ENCODE measurements at regions of chr3 and their contacts with region 1.

Region 1: GRCh38 chr3:64945171-64945729 is 257.4 kb upstream of the ADAMTS9 start:
- DNase-seq: peak; percentile 84 to 87
- H3K4me3 ChIP-seq: no peak overlapping the region
- H3K4me3 Mint-ChIP-seq: peak overlapping the region; percentile 25
- H3K27ac Mint-ChIP-seq: peak overlapping the region; percentile 10
- H3K4me1 ChIP-seq: peaks cover 25% of the 10 kb centered on the region
- H3K4me1 Mint-ChIP-seq: peaks cover 13% of the 10 kb centered on the region
- H3K27me3 ChIP-seq: no peaks in the 10 kb centered on the region
- H3K27me3 Mint-ChIP-seq: no peaks in the 10 kb centered on the region
- CTCF ChIP-seq: no peak

Region 2: DNA sequence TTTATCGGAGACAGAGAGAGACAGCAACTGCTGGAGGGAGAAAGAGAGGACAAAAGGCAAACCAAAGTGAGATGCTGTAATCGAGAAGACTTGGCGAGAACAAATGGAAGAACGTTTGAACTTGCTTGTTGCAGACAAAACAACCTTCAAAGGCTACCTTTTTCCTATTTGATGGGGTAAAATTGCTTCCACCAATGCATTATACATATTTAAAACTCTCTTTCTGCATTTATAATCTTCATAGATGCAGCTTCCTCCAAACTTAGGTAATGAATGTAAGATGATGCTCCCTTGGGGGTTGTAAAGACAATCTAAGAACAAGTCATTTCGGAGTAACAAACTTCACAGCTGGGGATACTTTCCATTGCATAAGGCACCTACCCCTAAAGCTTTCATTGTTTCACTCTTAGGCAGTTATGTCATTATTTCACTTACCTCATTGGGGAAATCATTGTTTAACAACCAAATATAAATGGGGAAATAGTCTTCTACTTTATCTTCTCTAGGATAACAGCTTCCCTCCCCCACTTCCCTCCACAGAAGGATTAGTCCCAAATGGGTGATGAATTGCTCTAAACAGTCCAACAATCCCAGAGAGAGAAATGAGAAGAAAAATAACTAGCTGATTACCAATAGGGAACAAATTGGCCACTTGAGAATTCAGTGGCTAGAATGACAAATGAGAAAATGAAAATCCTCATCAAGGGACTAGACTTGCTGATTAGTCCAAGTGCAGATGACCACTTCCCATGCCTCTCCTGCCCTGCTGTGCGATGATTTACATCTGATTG is 12.4 kb after region 1 on chr3:
- CTCF ChIA-PET with region 1: no interaction called
- POLR2A ChIA-PET with region 1: no interaction called
- intact Hi-C with region 1: no loop called
- DNase-seq: no peak
- H3K4me3 ChIP-seq: no peak overlapping the region
- H3K4me3 Mint-ChIP-seq: no peak overlapping the region
- H3K27ac Mint-ChIP-seq: no peak overlapping the region
- H3K4me1 ChIP-seq: no peaks in the 10 kb centered on the region
- H3K4me1 Mint-ChIP-seq: no peaks in the 10 kb centered on the region
- H3K27me3 ChIP-seq: no peaks in the 10 kb centered on the region
- H3K27me3 Mint-ChIP-seq: no peaks in the 10 kb centered on the region
- CTCF ChIP-seq: no peak

Region 3: DNA sequence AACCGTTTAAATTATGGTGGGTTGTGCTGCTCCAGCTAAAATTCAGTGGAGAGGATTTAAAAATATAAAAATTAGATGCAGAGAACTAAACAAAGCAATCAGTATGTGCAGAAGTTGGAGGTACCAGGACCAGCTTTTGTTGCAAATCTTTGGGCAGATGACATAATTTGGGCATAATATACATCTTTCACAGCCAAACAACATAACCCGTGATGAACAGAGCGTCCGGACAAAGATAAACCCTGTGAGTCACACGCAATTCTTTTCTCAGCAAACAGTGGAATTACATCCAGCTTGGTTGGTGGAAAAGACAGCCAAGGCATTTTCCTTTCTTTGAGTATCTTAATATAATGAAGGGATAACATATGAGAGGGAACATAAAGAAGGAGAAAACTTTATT is 161.9 kb after region 1 on chr3:
- CTCF ChIA-PET with region 1: no interaction called
- POLR2A ChIA-PET with region 1: no interaction called
- intact Hi-C with region 1: loop called (anchors 10 kb)
- DNase-seq: no peak
- H3K4me3 ChIP-seq: no peak overlapping the region
- H3K4me3 Mint-ChIP-seq: no peak overlapping the region
- H3K27ac Mint-ChIP-seq: no peak overlapping the region
- H3K4me1 ChIP-seq: peaks cover 9% of the 10 kb centered on the region
- H3K4me1 Mint-ChIP-seq: peaks cover 15% of the 10 kb centered on the region
- H3K27me3 ChIP-seq: no peaks in the 10 kb centered on the region
- H3K27me3 Mint-ChIP-seq: no peaks in the 10 kb centered on the region
- CTCF ChIP-seq: no peak

Measured in Caco-2 (cell line).